Activated CD4-positive, alpha-beta T cell treated with anti-CD3 and anti-CD28 coated beads for 36 hours (primary cell): ENCODE measurements at regions of chr2 and their contacts with region 1.

Region 1: DNA sequence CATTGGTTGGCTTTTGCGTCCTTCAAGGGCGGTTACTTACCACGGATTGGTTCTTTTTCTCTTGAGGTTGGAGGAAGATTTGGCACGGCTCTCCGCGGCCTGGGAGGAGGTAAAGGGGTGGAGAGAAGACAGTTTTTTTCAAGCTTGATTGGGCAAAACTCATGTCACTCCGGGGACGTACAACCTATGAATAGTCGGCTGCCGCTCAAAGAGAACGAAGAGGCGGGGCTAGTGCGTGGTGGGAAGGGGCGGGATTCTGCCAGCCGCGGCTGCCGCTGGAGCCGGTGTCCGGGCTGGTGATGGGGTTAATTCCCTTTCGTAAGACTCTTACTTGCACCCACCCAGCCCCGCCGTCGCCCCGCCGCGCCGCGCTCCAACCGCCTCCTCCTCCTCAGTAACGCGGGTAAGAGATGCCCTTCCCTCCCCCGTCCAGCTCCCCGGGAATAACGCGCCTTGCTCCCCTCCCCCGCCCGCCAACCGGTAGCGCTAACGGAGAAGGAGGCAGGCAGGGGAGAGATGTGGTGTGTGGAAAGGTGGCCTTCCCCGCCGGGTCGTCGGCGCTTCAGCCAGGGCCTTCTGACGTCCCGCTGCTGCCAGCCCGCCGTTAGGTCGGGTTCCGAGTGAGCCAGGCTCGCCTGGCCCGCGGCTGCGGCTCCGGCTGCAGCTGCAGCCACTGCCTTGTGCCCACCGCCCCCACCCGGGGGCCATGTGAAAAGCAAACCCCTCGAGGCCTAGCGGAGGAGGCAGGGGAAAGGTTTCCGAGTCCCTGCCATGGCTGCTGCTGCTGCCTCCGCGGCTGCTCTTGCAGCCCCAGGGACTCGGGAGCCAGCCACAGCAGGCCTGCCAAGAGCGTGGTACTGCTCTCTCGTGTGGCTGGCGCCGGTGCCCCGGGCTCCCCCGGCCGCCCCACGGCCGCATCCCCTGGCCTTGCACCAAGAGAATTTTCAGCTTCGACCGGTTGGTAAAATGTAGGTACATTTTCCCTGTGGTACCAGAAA is at the start of gene R3HDM1:
- DNase-seq: peak; percentile 96
- ATAC-seq: peak; percentile 88
- H3K4me3 Mint-ChIP-seq: no peak within 1 kb of the TSS
- H3K27ac Mint-ChIP-seq: peak within 1 kb of the TSS; percentile 84
- H3K4me1 Mint-ChIP-seq: peaks cover 32% of the 10 kb centered on the region
- H3K27me3 Mint-ChIP-seq: no peaks in the 10 kb centered on the region
- total RNA-seq, gene R3HDM1: 62.6 to 100.0 TPM

Region 2: DNA sequence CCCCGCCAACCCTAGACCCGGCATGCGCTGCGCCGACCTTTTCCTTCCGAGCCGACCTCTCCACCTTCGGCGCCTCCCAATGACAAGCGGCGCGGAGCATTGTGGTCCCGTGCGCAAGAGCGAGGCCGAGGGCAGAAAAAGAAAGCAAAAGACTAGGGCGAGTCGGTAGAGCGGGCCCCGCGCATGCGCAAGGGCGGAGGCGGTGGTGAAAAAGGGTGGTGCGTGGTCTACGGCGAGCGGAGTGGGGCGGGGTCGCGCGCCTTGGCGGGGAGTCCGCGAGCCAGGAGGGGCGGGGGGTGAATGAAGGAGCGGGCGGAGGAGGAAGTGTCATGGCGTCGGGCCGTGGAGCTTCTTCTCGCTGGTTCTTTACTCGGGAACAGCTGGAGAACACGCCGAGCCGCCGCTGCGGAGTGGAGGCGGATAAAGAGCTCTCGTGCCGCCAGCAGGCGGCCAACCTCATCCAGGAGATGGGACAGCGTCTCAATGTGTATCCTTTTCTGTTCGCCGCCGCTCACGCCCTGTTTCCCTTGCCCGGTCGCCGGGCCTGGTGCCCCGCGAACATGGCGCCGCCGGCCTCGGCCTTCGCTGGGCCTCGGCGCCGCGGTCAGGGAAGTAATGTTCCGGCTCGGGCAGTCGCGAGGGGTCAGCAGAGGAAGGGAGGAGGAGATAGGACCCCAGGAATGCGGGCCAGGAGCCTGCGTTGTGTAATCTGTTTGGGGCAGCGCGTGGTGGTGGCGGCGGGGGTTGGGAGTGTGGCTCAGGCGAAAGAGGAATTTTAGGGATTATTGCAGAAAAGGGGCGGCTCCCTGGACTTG is 612.8 kb before region 1 on chr2 and contains the start of gene CCNT2:
- CTCF ChIA-PET with region 1: no interaction called
- POLR2A ChIA-PET with region 1: interaction called, 9 read pairs
- intact Hi-C with region 1: loop called (anchors 1 kb)
- DNase-seq: peak; percentile 100
- ATAC-seq: peak; percentile 89
- H3K4me3 Mint-ChIP-seq: peak within 1 kb of the TSS; percentile 92
- H3K27ac Mint-ChIP-seq: peak within 1 kb of the TSS; percentile 98
- H3K4me1 Mint-ChIP-seq: peaks cover 27% of the 10 kb centered on the region
- H3K27me3 Mint-ChIP-seq: no peaks in the 10 kb centered on the region
- total RNA-seq, gene CCNT2: 29.3 to 36.6 TPM

Region 3: DNA sequence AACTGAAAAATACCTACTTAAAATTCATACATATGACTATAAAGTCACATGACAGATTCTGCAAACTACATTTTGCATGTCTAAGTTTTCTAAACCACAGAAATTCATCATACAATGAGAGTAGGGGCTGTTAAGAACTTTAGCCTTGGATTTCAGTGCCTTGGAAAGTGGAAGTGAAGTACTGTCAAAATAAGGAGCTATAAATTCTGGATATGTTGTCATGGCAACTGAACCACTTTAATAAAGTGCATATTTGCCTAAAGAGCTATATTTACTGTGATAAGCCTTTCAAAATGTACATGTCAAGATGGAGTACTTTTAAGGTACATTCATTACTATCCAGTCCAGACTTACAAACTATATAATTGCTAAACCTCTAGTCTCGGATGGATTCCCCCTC is 252.3 kb before region 1 on chr2:
- CTCF ChIA-PET with region 1: no interaction called
- POLR2A ChIA-PET with region 1: no interaction called
- intact Hi-C with region 1: no loop called
- DNase-seq: no peak
- ATAC-seq: no peak
- H3K4me3 Mint-ChIP-seq: no peak overlapping the region
- H3K27ac Mint-ChIP-seq: no peak overlapping the region
- H3K4me1 Mint-ChIP-seq: no peaks in the 10 kb centered on the region
- H3K27me3 Mint-ChIP-seq: no peaks in the 10 kb centered on the region

Region 4: GRCh38 chr2:135378591-135378990 is 152.9 kb before region 1 on chr2:
- CTCF ChIA-PET with region 1: no interaction called
- POLR2A ChIA-PET with region 1: no interaction called
- intact Hi-C with region 1: no loop called
- DNase-seq: no peak
- ATAC-seq: no peak
- H3K4me3 Mint-ChIP-seq: no peak overlapping the region
- H3K27ac Mint-ChIP-seq: no peak overlapping the region
- H3K4me1 Mint-ChIP-seq: no peaks in the 10 kb centered on the region
- H3K27me3 Mint-ChIP-seq: no peaks in the 10 kb centered on the region

Region 5: GRCh38 chr2:135664623-135665068 is 133.1 kb after region 1 on chr2:
- CTCF ChIA-PET with region 1: no interaction called
- POLR2A ChIA-PET with region 1: no interaction called
- intact Hi-C with region 1: loop called in 1 of 2 experiments (anchors 1 kb)
- DNase-seq: no peak
- ATAC-seq: peak; percentile 79
- H3K4me3 Mint-ChIP-seq: no peak overlapping the region
- H3K27ac Mint-ChIP-seq: peak overlapping the region; percentile 1
- H3K4me1 Mint-ChIP-seq: peaks cover 30% of the 10 kb centered on the region
- H3K27me3 Mint-ChIP-seq: no peaks in the 10 kb centered on the region

Region 6: GRCh38 chr2:135741395-135742324 is 210.1 kb after region 1 on chr2 and contains the start of gene UBXN4:
- CTCF ChIA-PET with region 1: no interaction called
- POLR2A ChIA-PET with region 1: interaction called, 3 read pairs
- intact Hi-C with region 1: loop called (anchors 1 kb)
- DNase-seq: peak; percentile 98
- ATAC-seq: peak; percentile 93
- H3K4me3 Mint-ChIP-seq: peak within 1 kb of the TSS; percentile 97
- H3K27ac Mint-ChIP-seq: peak within 1 kb of the TSS; percentile 99
- H3K4me1 Mint-ChIP-seq: peaks cover 35% of the 10 kb centered on the region
- H3K27me3 Mint-ChIP-seq: no peaks in the 10 kb centered on the region
- total RNA-seq, gene UBXN4: 97.0 to 104 TPM

Region 7: DNA sequence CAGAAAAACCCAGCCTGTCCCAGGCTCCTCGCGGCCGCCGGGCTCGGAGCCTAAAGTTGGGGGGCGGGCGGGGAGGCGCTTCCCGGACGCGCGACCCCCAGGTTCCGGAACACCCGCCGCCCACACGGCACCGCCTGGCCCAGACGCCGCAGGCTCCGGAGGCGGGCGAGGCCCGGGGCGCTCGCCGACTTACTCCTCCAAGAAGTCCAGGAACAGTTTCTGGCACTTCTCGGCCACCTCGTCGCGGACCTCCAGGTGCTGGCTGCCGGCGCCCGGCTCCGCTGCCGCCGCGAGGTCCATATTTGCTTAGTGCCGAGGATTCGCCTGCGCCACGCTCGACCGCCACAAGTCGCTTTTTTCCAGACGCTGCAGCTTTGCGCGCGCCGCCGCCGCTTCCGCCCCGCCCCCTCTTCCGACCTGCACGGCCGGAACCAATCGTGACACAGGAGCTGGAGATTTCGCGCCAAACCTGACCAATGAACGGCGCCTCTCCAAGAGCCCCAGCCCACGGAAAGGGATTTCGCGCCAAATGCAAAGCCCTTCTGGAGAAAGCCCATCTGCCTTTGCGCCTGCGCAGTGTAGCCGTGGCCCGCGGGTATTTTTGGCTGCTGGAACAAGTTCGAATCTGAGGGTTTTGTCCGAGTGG is 344.7 kb after region 1 on chr2 and contains the start of gene MCM6:
- CTCF ChIA-PET with region 1: no interaction called
- POLR2A ChIA-PET with region 1: interaction called, 5 read pairs
- intact Hi-C with region 1: loop called (anchors 2 to 5 kb)
- DNase-seq: peak; percentile 100
- ATAC-seq: peak; percentile 88
- H3K4me3 Mint-ChIP-seq: peak within 1 kb of the TSS; percentile 86
- H3K27ac Mint-ChIP-seq: peak within 1 kb of the TSS; percentile 96
- H3K4me1 Mint-ChIP-seq: peaks cover 44% of the 10 kb centered on the region
- H3K27me3 Mint-ChIP-seq: no peaks in the 10 kb centered on the region
- total RNA-seq, gene MCM6: 228 to 276 TPM